Posterior vena cava (tissue), 2 donors: ENCODE measurements at regions of chr20 and their contacts with region 1.

Region 1: DNA sequence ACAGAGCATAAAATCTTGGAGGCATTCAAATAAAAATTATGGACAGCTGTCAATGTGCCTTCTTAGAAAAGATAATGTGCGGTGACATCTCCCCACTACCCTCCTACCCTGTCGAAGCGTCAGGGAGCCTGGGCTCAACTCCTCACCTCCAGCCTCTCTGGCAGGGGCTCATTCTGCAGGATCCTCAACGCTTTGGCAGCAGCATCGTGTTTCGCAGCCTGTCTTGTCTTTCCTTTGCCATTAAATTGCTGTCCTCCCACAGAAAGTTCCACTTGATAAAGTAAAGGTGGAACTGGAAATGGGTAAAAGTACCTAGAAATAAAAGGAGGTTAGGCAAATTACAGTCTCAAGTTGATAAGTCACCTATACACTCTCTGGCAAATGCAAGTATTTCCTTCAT is 36.7 kb downstream of the STAU1 start:
- DNase-seq: no peak

Region 2: GRCh38 chr20:49508435-49509199 is 357.2 kb after region 1 on chr20:
- intact Hi-C with region 1: no loop called
- DNase-seq: no peak

Region 3: DNA sequence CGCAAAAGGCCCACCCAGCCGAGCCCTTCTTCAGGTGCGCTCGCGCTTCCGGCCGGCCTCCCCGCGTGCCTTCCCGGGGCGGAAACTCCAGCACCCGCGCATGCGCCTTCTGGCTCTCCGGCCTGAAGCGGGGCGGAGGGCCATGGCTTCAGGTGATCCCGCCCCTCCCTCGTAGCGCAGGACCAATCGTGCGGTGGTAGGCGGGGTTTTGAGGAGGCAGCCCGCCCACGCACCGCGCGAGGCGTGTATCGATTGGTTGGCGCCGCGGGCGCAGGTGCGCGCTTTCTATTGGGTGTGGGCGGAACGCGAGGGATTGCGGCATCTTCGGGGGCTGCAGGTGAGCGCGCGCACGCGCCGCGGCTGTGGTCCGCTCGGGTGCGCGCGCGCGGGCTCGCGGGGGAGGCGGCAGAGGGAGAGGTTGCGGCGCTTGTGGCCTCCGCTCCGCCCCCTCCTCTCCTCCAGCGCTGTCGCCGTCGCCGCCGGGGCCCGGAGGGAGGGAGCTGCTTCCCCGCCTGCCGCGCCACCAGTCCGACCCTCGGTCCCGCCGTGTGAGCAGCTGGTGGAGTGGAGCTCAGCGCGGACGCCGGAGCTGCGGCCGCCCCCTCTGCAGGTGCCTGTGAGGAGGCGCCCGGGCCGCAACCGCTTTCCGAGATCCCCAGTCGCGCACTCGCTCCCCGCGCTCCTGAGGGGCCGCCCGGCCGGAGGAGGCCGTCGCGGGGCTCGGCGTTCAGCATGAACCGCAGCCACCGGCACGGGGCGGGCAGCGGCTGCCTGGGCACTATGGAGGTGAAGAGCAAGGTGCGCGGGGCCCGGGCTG is 1579.8 kb after region 1 on chr20 and contains the start of gene PARD6B:
- intact Hi-C with region 1: loop called in 1 of 2 experiments (anchors 5 kb)
- DNase-seq: peak; percentile 97
- total RNA-seq, gene PARD6B: 1.0 to 1.4 TPM